ENCODE measurements at regions of chr18 and their contacts with region 1.

Region 1: DNA sequence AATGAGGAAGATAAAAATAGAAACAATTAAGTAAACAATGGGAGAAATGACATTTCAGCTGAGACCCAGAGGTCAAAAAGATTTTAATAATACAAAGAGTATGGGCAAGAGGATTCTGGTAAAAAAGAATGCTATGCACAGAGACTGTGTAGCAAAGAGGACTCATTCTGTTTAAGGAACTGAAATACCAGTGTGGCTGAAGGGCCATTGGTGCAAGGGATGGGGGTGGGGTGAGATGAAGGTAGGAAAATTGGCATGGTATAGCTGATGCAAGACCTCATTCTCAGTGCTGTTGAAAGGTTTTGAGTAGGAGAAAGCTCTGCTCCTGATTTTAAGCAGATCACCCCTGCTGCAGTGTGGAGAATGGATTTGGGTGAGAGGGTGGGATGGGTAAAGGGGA is 10.8 kb downstream of the GALNT1 start:
- DNase-seq: no peak
- ATAC-seq: no peak
- H3K4me3 ChIP-seq: no peak overlapping the region
- H3K27ac ChIP-seq: no peak overlapping the region
- H3K4me1 ChIP-seq: peaks cover 5% of the 10 kb centered on the region
- H3K27me3 ChIP-seq: no peaks in the 10 kb centered on the region
- CTCF ChIP-seq: no peak
- POLR2A ChIP-seq: no peak
- RAD21 ChIP-seq: no peak

Region 2: GRCh38 chr18:35683021-35683420 is 90.7 kb after region 1 on chr18:
- CTCF ChIA-PET with region 1: no interaction called
- POLR2A ChIA-PET with region 1: no interaction called
- dilution Hi-C with region 1: no loop called
- in situ Hi-C with region 1: no loop called
- intact Hi-C with region 1: loop called (anchors 5 kb)
- DNase-seq: peak; percentile 10
- ATAC-seq: peak; percentile 53
- H3K4me3 ChIP-seq: no peak overlapping the region
- H3K27ac ChIP-seq: no peak overlapping the region
- H3K4me1 ChIP-seq: peaks cover 6% of the 10 kb centered on the region
- H3K27me3 ChIP-seq: no peaks in the 10 kb centered on the region
- CTCF ChIP-seq: no peak
- POLR2A ChIP-seq: no peak
- RAD21 ChIP-seq: no peak